ENCODE measurements at regions of chr1 and their contacts with region 1.

Region 1: DNA sequence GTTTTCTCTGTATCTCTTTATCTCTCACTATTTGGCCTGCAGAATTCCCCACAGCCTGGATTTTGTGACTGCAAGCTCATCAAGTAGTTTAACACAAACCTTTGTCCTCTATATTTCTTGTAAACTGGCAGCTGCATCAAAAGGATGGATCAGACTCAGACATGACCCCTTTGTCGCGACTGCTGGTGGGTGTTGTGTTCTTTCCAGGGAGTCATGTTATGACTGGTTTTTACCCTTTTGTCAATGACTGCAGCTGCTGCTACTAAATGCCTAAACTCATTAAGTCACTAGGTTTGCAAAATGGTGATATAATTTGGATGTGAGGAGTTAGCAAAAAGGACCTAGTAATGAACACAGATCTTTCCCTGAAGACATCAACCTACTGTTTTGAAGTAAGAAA is 10.2 kb upstream of the TOMM20 start:
- DNase-seq: peak; percentile 66
- ATAC-seq: peak; percentile 91
- H3K4me3 Mint-ChIP-seq: no peak overlapping the region
- H3K27ac Mint-ChIP-seq: peak overlapping the region; percentile 40
- H3K4me1 Mint-ChIP-seq: peaks cover 19% of the 10 kb centered on the region
- H3K27me3 Mint-ChIP-seq: no peaks in the 10 kb centered on the region
- CTCF ChIP-seq: no peak

Region 2: GRCh38 chr1:235160957-235161684 is 22.3 kb after region 1 on chr1 and contains the start of gene RBM34:
- CTCF ChIA-PET with region 1: interaction called, 10 read pairs
- POLR2A ChIA-PET with region 1: interaction called, 17 read pairs
- intact Hi-C with region 1: no loop called
- DNase-seq: peak; percentile 94
- ATAC-seq: peak; percentile 95
- H3K4me3 Mint-ChIP-seq: peak within 1 kb of the TSS; percentile 99
- H3K27ac Mint-ChIP-seq: peak within 1 kb of the TSS; percentile 100
- H3K4me1 Mint-ChIP-seq: peaks cover 16% of the 10 kb centered on the region
- H3K27me3 Mint-ChIP-seq: no peaks in the 10 kb centered on the region
- CTCF ChIP-seq: peak; percentile 10
- total RNA-seq, gene RBM34: 136 TPM

Region 3: DNA sequence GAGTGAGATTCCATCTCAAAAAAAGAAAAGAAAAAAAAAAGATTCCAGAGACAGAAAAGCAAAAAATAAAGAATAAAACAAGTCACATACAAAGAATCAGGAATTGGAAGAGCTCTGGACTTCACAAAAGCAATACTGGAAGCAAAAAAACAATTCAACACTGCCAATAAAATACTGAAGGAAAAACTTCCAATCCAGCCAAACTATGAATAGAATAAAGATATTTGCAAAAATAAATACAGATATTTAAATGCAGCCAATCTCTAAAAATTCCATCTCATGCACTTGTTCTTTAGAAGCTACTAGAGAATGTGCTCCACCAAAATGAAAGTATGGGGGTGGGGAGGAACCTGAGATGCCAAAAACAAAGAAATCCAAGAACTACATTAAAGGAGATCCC is 51.6 kb after region 1 on chr1:
- CTCF ChIA-PET with region 1: no interaction called
- POLR2A ChIA-PET with region 1: no interaction called
- intact Hi-C with region 1: no loop called
- DNase-seq: no peak
- ATAC-seq: no peak
- H3K4me3 Mint-ChIP-seq: no peak overlapping the region
- H3K27ac Mint-ChIP-seq: no peak overlapping the region
- H3K4me1 Mint-ChIP-seq: peaks cover 8% of the 10 kb centered on the region
- H3K27me3 Mint-ChIP-seq: no peaks in the 10 kb centered on the region
- CTCF ChIP-seq: no peak